Activated B cell treated with CpG ODN at 0.5 μM for 24 hours (primary cell): ENCODE measurements at regions of chr5 and their contacts with region 1.

Region 1: GRCh38 chr5:159106569-159107282 is 7.0 kb upstream of the EBF1 start:
- DNase-seq: peak; percentile 79
- ATAC-seq: peak; percentile 71
- H3K4me3 Mint-ChIP-seq: peak overlapping the region; percentile 86
- H3K27ac Mint-ChIP-seq: peak overlapping the region; percentile 95
- H3K4me1 Mint-ChIP-seq: peaks cover 53% of the 10 kb centered on the region
- H3K27me3 Mint-ChIP-seq: no peaks in the 10 kb centered on the region
- CTCF ChIP-seq: peak; percentile 69

Region 2: GRCh38 chr5:157994906-157995519 is 1111.7 kb before region 1 on chr5:
- CTCF ChIA-PET with region 1: interaction called, 11 read pairs
- POLR2A ChIA-PET with region 1: no interaction called
- intact Hi-C with region 1: no loop called
- DNase-seq: peak; percentile 21
- ATAC-seq: peak; percentile 84
- H3K4me3 Mint-ChIP-seq: no peak overlapping the region
- H3K27ac Mint-ChIP-seq: no peak overlapping the region
- H3K4me1 Mint-ChIP-seq: no peaks in the 10 kb centered on the region
- H3K27me3 Mint-ChIP-seq: peaks cover 2% of the 10 kb centered on the region
- CTCF ChIP-seq: no peak

Region 3: DNA sequence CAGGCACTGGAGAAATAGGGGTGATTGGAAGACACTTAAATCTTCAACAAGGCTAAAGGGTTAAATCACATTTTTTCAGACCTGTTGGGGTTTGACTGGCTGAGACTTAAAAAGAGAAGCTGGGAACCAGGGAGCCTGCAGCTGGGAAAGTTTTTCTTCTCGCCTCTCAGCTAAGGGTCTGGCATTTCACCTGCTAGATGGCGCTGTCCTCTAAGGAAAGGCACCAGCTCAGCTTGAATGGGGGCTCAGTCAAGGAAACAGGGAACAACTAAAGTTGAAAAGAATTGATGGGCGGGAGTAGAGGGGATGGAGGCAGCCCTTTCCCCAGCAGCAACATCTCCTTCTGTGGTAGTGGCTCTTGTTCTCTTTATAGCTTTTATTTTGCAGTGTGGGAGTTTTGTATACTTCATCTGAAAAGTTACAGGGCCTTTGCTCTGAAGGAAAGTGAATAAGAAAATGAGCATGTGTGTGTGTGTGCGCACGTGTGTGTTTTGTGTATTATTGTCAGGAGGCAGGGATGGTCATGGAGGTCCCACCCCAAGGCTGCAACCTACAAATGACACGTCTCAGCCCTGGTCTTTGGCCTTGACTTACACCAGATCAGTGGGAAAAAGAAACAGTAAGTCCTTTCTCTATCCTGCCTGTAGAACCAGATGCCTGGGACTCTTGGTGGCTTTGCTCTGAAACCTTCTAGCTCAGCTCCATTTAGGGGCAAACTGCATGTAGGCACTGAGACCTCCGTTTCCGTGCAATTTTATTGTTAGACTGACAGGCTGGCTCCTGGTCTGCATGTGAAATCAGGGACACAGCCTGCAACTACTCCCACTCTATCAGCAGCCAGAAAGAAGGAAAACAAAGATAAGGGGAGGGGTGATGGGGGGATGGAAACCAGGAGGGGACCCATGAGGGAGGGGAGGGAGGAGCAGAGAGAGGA is 931.5 kb before region 1 on chr5:
- CTCF ChIA-PET with region 1: interaction called, 112 read pairs
- POLR2A ChIA-PET with region 1: interaction called, 20 read pairs
- intact Hi-C with region 1: no loop called
- DNase-seq: peak; percentile 48
- ATAC-seq: peak; percentile 82
- H3K4me3 Mint-ChIP-seq: no peak overlapping the region
- H3K27ac Mint-ChIP-seq: no peak overlapping the region
- H3K4me1 Mint-ChIP-seq: peaks cover 33% of the 10 kb centered on the region
- H3K27me3 Mint-ChIP-seq: no peaks in the 10 kb centered on the region
- CTCF ChIP-seq: peak; percentile 76

Region 4: DNA sequence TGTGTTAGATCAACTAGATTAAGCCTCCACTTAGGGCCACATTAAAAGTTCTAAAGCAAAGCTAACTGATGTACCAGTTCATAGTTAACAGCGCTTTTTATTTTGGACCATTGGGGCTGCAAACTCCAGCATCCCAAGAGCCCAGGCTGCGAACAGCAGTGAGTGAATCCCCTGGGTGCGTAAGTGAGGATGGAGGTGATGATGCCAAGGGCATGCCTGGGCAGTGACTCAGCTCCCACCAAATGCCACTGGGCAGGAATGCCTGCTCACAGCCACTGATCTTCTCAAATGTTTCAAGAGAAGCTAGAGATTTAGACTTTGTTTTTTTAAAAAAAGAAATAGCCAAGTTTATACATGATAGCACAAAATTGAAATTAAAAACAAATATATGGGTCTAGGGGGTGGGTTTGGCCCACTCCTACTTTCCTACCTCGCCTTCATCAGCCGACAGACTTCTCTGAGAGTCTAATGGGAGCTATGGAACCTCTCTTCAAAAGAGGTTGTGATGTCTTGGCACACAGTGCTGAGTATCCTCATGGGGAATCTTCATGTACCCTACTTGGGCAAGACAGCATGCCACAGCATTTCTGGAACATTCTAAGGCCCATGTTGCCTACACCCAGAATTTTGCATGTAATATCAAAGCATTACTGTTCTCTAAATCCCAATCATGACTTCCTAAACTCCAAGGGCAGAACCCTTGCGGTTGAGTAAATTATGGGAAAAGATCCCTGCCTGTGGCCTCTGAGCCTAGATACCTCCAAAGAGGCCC is 405.1 kb before region 1 on chr5:
- CTCF ChIA-PET with region 1: interaction called, 231 read pairs
- POLR2A ChIA-PET with region 1: interaction called, 97 read pairs
- intact Hi-C with region 1: no loop called
- DNase-seq: no peak
- ATAC-seq: no peak
- H3K4me3 Mint-ChIP-seq: peak overlapping the region; percentile 28
- H3K27ac Mint-ChIP-seq: peak overlapping the region; percentile 76
- H3K4me1 Mint-ChIP-seq: peaks cover 31% of the 10 kb centered on the region
- H3K27me3 Mint-ChIP-seq: no peaks in the 10 kb centered on the region
- CTCF ChIP-seq: no peak

Region 5: GRCh38 chr5:158898185-158899177 is 208.2 kb before region 1 on chr5:
- CTCF ChIA-PET with region 1: interaction called, 6 read pairs
- POLR2A ChIA-PET with region 1: interaction called, 86 read pairs
- intact Hi-C with region 1: loop called (anchors 1 kb)
- DNase-seq: peak; percentile 33
- ATAC-seq: peak; percentile 74
- H3K4me3 Mint-ChIP-seq: peak overlapping the region; percentile 25
- H3K27ac Mint-ChIP-seq: peak overlapping the region; percentile 93
- H3K4me1 Mint-ChIP-seq: peaks cover 78% of the 10 kb centered on the region
- H3K27me3 Mint-ChIP-seq: no peaks in the 10 kb centered on the region
- CTCF ChIP-seq: no peak

Region 6: DNA sequence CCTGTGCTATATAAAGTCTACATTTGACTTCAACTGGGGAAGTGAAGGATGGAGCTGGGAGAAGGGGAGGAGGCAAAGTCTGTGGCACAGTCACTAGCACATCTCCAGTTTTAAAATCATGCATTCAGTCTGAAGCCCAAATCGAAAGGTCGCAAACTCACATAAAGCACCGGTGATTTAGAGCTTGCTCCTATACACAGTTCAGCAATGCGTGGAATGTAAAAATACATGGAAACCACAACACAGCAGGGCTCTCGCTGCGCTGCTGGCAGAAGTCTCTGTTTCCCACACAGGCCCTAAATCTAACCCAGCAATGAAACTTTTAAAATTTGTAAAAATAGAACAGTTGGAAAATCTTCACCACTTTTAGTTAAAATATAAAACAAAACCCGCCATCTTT is 75.2 kb before region 1 on chr5:
- CTCF ChIA-PET with region 1: no interaction called
- POLR2A ChIA-PET with region 1: no interaction called
- intact Hi-C with region 1: no loop called
- DNase-seq: no peak
- ATAC-seq: peak; percentile 57
- H3K4me3 Mint-ChIP-seq: peak overlapping the region; percentile 70
- H3K27ac Mint-ChIP-seq: peak overlapping the region; percentile 73
- H3K4me1 Mint-ChIP-seq: peaks cover 85% of the 10 kb centered on the region
- H3K27me3 Mint-ChIP-seq: no peaks in the 10 kb centered on the region
- CTCF ChIP-seq: no peak

Region 7: DNA sequence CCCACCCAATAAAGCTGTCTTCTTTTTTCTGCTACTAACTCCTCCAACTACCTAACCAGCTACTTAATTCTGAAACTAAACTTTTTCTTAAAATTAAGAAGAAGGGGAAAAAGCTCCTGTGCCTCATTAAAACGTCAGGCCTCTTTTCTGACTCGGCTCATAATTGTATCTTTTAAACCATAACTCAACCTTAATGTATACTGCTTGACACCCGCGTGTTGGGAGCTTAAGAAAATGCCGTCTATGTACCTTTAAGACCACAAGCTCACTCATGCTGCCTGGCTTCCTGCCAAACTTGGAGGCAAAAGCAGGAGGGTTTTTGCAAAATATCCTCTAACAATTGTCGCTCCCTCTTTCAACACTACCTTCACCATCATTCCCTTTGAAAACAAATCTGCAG is 12.0 kb before region 1 on chr5:
- CTCF ChIA-PET with region 1: interaction called, 3 read pairs
- POLR2A ChIA-PET with region 1: interaction called, 49 read pairs
- intact Hi-C with region 1: loop called (anchors 1 kb)
- DNase-seq: peak; percentile 44
- ATAC-seq: no peak
- H3K4me3 Mint-ChIP-seq: peak overlapping the region; percentile 99
- H3K27ac Mint-ChIP-seq: peak overlapping the region; percentile 67
- H3K4me1 Mint-ChIP-seq: peaks cover 70% of the 10 kb centered on the region
- H3K27me3 Mint-ChIP-seq: no peaks in the 10 kb centered on the region
- CTCF ChIP-seq: no peak